Caco-2 (cell line): ENCODE measurements at regions of chr6 and their contacts with region 1.

Region 1: DNA sequence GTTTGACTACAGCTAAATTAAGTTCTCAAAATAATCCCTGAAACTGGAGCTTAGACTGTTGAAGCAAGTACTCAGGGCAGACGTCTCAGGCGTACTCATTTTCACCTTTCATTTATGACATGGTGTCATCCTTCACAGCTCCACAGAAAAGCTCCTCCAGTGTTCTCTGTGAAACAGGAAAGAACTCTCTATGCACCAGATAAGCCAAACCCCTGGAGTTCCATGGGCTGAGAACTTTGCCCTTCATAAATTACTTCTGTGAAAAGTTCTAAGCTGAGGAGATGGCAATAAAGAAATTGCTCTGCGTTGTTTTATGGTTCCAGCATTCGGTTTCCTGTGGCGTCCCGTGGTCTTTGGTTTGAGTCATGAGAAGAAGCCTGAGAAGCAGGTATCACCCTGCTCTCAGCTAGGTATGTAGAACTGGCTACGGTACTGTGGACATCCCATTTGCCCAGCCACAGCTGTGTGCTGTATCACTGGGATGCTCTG is 20.2 kb upstream of the RREB1 start:
- DNase-seq: peak; percentile 23 to 57
- H3K4me3 ChIP-seq: no peak overlapping the region
- H3K4me3 Mint-ChIP-seq: no peak overlapping the region
- H3K27ac Mint-ChIP-seq: no peak overlapping the region
- H3K4me1 ChIP-seq: peaks cover 16% of the 10 kb centered on the region
- H3K4me1 Mint-ChIP-seq: peaks cover 7% of the 10 kb centered on the region
- H3K27me3 ChIP-seq: no peaks in the 10 kb centered on the region
- H3K27me3 Mint-ChIP-seq: no peaks in the 10 kb centered on the region
- CTCF ChIP-seq: no peak

Region 2: GRCh38 chr6:6314596-6314995 is 772.9 kb before region 1 on chr6:
- CTCF ChIA-PET with region 1: no interaction called
- POLR2A ChIA-PET with region 1: no interaction called
- intact Hi-C with region 1: no loop called
- DNase-seq: no peak
- H3K4me3 ChIP-seq: no peak overlapping the region
- H3K4me3 Mint-ChIP-seq: no peak overlapping the region
- H3K27ac Mint-ChIP-seq: no peak overlapping the region
- H3K4me1 ChIP-seq: no peaks in the 10 kb centered on the region
- H3K4me1 Mint-ChIP-seq: no peaks in the 10 kb centered on the region
- H3K27me3 ChIP-seq: no peaks in the 10 kb centered on the region
- H3K27me3 Mint-ChIP-seq: peaks cover 12% of the 10 kb centered on the region
- CTCF ChIP-seq: no peak

Region 3: GRCh38 chr6:6686748-6687601 is 400.6 kb before region 1 on chr6:
- CTCF ChIA-PET with region 1: no interaction called
- POLR2A ChIA-PET with region 1: interaction called, 10 read pairs
- intact Hi-C with region 1: no loop called
- DNase-seq: peak; percentile 92 to 96
- H3K4me3 ChIP-seq: peak overlapping the region; percentile 20
- H3K4me3 Mint-ChIP-seq: peak overlapping the region; percentile 65
- H3K27ac Mint-ChIP-seq: peak overlapping the region; percentile 71
- H3K4me1 ChIP-seq: peaks cover 24% of the 10 kb centered on the region
- H3K4me1 Mint-ChIP-seq: peaks cover 18% of the 10 kb centered on the region
- H3K27me3 ChIP-seq: no peaks in the 10 kb centered on the region
- H3K27me3 Mint-ChIP-seq: no peaks in the 10 kb centered on the region
- CTCF ChIP-seq: no peak

Region 4: DNA sequence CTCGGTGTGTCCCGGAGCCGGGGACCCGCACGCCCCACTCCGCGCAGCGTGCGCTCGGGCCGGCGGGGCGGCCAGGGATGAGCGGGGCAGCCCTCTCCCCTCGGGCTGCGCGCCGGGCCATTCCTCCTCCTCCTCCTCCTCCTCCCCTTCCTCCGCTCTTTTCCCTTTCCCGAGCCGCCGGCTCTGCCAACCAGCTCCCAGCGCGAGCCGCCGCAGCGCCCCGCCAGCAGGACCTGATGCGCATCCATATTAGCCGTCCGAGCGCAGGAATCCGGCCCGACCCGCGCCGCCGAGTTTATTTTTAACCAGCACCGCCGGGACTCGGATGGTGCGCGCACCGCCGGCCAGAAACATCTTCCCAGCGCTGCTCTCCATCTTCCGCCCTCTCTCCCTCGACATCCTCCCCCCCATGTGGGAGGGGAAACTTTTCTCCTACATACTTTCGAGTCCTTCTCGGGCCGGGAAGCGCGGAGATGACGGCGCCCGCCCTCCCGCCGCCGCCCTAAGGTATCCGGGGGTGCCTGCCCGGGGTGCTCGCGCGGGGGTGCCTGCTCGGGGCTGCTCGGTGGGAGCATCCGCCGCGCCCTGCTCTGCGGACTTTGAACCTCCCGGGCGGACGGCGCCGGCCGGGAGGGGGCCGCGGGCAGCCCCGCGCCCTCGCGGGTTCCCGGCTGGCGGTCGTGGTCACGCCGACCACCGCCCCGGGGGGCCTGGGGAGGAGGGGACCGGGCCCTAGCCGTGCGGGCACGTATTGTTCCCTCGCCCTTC is 20.8 kb after region 1 on chr6:
- CTCF ChIA-PET with region 1: no interaction called
- POLR2A ChIA-PET with region 1: no interaction called
- intact Hi-C with region 1: no loop called
- DNase-seq: peak; percentile 62 to 64
- H3K4me3 ChIP-seq: peak overlapping the region; percentile 63
- H3K4me3 Mint-ChIP-seq: peak overlapping the region; percentile 68
- H3K27ac Mint-ChIP-seq: peak overlapping the region; percentile 82
- H3K4me1 ChIP-seq: peaks cover 27% of the 10 kb centered on the region
- H3K4me1 Mint-ChIP-seq: peaks cover 18% of the 10 kb centered on the region
- H3K27me3 ChIP-seq: no peaks in the 10 kb centered on the region
- H3K27me3 Mint-ChIP-seq: no peaks in the 10 kb centered on the region
- CTCF ChIP-seq: no peak